B cell (primary cell): ENCODE measurements at regions of chr4 and their contacts with region 1.

Region 1: GRCh38 chr4:184329659-184330400 is 112.2 kb upstream of the ENPP6 start:
- DNase-seq: peak; percentile 89
- ATAC-seq: peak; percentile 28
- H3K4me3 ChIP-seq: no peak overlapping the region
- H3K4me3 Mint-ChIP-seq: peak overlapping the region; percentile 75
- H3K27ac ChIP-seq: peak overlapping the region; percentile 89 to 91
- H3K27ac Mint-ChIP-seq: peak overlapping the region; percentile 96
- H3K4me1 ChIP-seq: peaks cover 63 to 65% of the 10 kb centered on the region in 2 donors
- H3K4me1 Mint-ChIP-seq: peaks cover 67% of the 10 kb centered on the region
- H3K27me3 ChIP-seq: no peaks in the 10 kb centered on the region
- H3K27me3 Mint-ChIP-seq: no peaks in the 10 kb centered on the region
- CTCF ChIP-seq: no peak

Region 2: DNA sequence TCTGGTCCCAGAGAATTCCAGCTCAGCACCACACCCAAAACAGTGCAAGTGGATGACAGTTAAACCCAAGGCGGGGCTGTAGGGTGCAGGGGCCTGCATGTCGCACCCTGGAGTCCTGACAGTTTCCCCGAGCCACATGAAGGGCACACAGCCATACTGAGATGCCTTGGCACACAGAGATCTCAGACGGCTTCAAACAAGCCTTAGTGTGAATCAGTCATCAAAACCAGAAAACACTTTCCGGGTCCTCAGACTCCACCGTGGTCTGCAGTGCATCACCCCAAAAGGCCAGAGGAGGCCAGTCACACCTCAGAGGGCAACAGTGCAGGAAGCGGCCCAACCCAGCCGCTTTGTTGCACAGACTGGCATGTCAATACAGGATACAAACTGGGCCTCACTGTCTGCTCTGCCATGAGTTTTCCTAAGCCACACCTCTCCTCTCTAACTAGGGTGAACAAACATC is 47.5 kb before region 1 on chr4:
- CTCF ChIA-PET with region 1: interaction called, 4 read pairs
- POLR2A ChIA-PET with region 1: no interaction called
- intact Hi-C with region 1: loop called (anchors 5 kb)
- DNase-seq: peak; percentile 62
- ATAC-seq: peak; percentile 72
- H3K4me3 ChIP-seq: no peak overlapping the region
- H3K4me3 Mint-ChIP-seq: peak overlapping the region; percentile 77
- H3K27ac ChIP-seq: peak overlapping the region; percentile 28 to 73
- H3K27ac Mint-ChIP-seq: peak overlapping the region; percentile 90
- H3K4me1 ChIP-seq: peaks cover 48% of the 10 kb centered on the region in 2 donors
- H3K4me1 Mint-ChIP-seq: peaks cover 58% of the 10 kb centered on the region
- H3K27me3 ChIP-seq: no peaks in the 10 kb centered on the region
- H3K27me3 Mint-ChIP-seq: no peaks in the 10 kb centered on the region
- CTCF ChIP-seq: peak; percentile 34

Region 3: GRCh38 chr4:184310171-184310567 is 19.7 kb before region 1 on chr4:
- CTCF ChIA-PET with region 1: interaction called, 49 read pairs
- POLR2A ChIA-PET with region 1: interaction called, 4 read pairs
- intact Hi-C with region 1: loop called (anchors 1 kb)
- DNase-seq: peak; percentile 71
- ATAC-seq: peak; percentile 21
- H3K4me3 ChIP-seq: no peak overlapping the region
- H3K4me3 Mint-ChIP-seq: peak overlapping the region; percentile 29
- H3K27ac ChIP-seq: no peak overlapping the region
- H3K27ac Mint-ChIP-seq: peak overlapping the region; percentile 56
- H3K4me1 ChIP-seq: peaks cover 46 to 48% of the 10 kb centered on the region in 2 donors
- H3K4me1 Mint-ChIP-seq: peaks cover 60% of the 10 kb centered on the region
- H3K27me3 ChIP-seq: no peaks in the 10 kb centered on the region
- H3K27me3 Mint-ChIP-seq: no peaks in the 10 kb centered on the region
- CTCF ChIP-seq: peak; percentile 58

Region 4: GRCh38 chr4:184318852-184319251 is 11.0 kb before region 1 on chr4:
- CTCF ChIA-PET with region 1: interaction called, 49 read pairs
- POLR2A ChIA-PET with region 1: interaction called, 4 read pairs
- intact Hi-C with region 1: loop called (anchors 1 kb)
- DNase-seq: no peak
- ATAC-seq: no peak
- H3K4me3 ChIP-seq: no peak overlapping the region
- H3K4me3 Mint-ChIP-seq: no peak overlapping the region
- H3K27ac ChIP-seq: peak overlapping the region; percentile 5 to 85
- H3K27ac Mint-ChIP-seq: peak overlapping the region; percentile 84
- H3K4me1 ChIP-seq: peaks cover 39 to 40% of the 10 kb centered on the region in 2 donors
- H3K4me1 Mint-ChIP-seq: peaks cover 63% of the 10 kb centered on the region
- H3K27me3 ChIP-seq: no peaks in the 10 kb centered on the region
- H3K27me3 Mint-ChIP-seq: no peaks in the 10 kb centered on the region
- CTCF ChIP-seq: no peak

Region 5: GRCh38 chr4:184343502-184344177 is 13.8 kb after region 1 on chr4:
- CTCF ChIA-PET with region 1: interaction called, 13 read pairs
- POLR2A ChIA-PET with region 1: interaction called, 10 read pairs
- intact Hi-C with region 1: loop called (anchors 2 kb)
- DNase-seq: peak; percentile 67
- ATAC-seq: peak; percentile 37
- H3K4me3 ChIP-seq: peak overlapping the region; percentile 55 to 70 (median 62)
- H3K4me3 Mint-ChIP-seq: peak overlapping the region; percentile 92
- H3K27ac ChIP-seq: peak overlapping the region; percentile 54 to 75
- H3K27ac Mint-ChIP-seq: peak overlapping the region; percentile 87
- H3K4me1 ChIP-seq: peaks cover 66 to 71% of the 10 kb centered on the region in 2 donors
- H3K4me1 Mint-ChIP-seq: peaks cover 68% of the 10 kb centered on the region
- H3K27me3 ChIP-seq: no peaks in the 10 kb centered on the region
- H3K27me3 Mint-ChIP-seq: no peaks in the 10 kb centered on the region
- CTCF ChIP-seq: no peak

Region 6: DNA sequence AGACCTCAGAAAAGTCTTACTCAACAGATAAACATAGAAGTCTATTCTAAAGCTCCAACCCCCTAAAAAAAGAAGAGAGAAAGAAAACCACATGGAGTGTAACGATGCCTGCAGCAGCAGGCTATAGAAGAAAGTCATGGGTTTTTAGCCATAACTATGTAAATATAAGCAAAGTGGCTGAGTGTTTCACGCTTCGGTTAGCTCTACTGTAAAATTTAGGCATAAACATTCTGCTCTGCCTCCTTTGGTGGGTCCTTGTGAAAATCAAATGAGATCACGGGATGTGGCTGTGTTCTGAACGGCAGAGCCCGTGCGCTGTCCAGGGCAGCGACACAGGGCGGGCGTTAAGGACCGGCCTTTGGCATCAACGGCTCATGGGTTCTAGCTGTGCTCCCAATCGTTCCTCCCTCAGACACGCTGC is 66.2 kb after region 1 on chr4:
- CTCF ChIA-PET with region 1: interaction called, 5 read pairs
- POLR2A ChIA-PET with region 1: interaction called, 4 read pairs
- intact Hi-C with region 1: loop called (anchors 1 kb)
- DNase-seq: peak; percentile 87
- ATAC-seq: peak; percentile 90
- H3K4me3 ChIP-seq: peak overlapping the region in 4 of 5 experiments; percentile 10 to 44 (median 15)
- H3K4me3 Mint-ChIP-seq: peak overlapping the region; percentile 89
- H3K27ac ChIP-seq: peak overlapping the region; percentile 9 to 79
- H3K27ac Mint-ChIP-seq: peak overlapping the region; percentile 95
- H3K4me1 ChIP-seq: peaks cover 27 to 35% of the 10 kb centered on the region in 2 donors
- H3K4me1 Mint-ChIP-seq: peaks cover 44% of the 10 kb centered on the region
- H3K27me3 ChIP-seq: no peaks in the 10 kb centered on the region
- H3K27me3 Mint-ChIP-seq: no peaks in the 10 kb centered on the region
- CTCF ChIP-seq: peak; percentile 15